ENCODE measurements at regions of chr19 and their contacts with region 1.

Region 1: DNA sequence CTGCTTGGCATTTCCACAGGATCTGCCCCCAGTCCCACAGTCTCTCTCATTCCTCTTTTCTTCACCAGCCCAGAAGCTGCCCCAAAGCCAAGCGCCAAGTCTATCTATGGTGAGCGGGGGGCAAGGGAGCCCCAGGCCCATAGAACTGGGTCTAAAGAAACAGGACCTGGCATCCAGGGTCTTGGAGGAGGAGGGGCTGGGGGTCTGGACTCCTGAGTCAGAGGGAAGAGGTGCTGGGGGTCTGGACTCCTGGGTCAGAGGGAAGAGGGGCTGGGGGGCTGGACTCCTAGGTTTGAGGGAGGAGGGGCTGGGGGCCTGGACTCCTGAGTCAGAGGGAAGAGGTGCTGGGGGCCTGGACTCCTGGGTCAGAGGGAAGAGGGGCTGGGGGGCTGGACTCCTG is 2.4 kb downstream of the EPS8L1 start:
- DNase-seq: no peak
- H3K4me3 ChIP-seq: no peak overlapping the region
- H3K27ac ChIP-seq: no peak overlapping the region
- H3K27me3 ChIP-seq: peaks cover 43% of the 10 kb centered on the region
- CTCF ChIP-seq: no peak

Region 2: DNA sequence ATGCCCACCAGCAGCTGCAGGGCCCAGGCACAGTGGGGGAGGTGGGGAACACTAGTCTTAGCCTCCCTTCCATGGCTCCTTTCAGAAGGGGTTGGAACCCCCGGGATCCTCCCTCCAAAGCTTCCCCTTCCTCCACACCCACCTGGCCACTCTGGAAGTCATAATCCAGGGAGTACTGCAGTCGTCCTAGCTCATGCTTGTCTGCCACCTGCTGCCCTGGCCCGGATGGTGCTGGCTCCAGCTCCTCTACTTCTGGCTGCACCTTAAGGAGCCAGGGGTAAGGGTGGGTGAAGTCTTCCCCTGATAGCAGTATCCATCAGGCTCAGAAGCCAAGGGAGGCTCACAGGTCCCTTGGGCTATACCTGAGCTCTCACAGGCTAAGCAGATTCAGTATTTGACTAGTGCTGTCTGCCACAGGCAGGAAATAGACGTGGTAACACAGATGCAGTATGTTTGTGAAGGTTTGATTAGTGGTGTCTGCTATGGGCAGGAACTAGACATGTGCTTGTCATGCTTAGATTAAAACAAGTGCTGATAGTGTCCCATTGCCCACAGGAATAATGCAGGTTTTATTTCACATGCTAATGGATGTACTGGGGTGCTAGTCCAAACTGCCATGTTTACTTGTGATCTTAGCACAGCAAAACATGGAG is 98.0 kb after region 1 on chr19:
- CTCF ChIA-PET with region 1: no interaction called
- POLR2A ChIA-PET with region 1: interaction called, 14 read pairs
- DNase-seq: no peak
- H3K4me3 ChIP-seq: no peak overlapping the region
- H3K27ac ChIP-seq: no peak overlapping the region
- H3K27me3 ChIP-seq: peaks cover 12% of the 10 kb centered on the region
- CTCF ChIP-seq: no peak

Region 3: GRCh38 chr19:55239004-55239740 is 161.2 kb after region 1 on chr19:
- CTCF ChIA-PET with region 1: no interaction called
- POLR2A ChIA-PET with region 1: interaction called, 13 read pairs
- DNase-seq: no peak
- H3K4me3 ChIP-seq: no peak overlapping the region
- H3K27ac ChIP-seq: no peak overlapping the region
- H3K27me3 ChIP-seq: no peaks in the 10 kb centered on the region
- CTCF ChIP-seq: no peak